ENCODE measurements at regions of chr4 and their contacts with region 1.

Region 1: DNA sequence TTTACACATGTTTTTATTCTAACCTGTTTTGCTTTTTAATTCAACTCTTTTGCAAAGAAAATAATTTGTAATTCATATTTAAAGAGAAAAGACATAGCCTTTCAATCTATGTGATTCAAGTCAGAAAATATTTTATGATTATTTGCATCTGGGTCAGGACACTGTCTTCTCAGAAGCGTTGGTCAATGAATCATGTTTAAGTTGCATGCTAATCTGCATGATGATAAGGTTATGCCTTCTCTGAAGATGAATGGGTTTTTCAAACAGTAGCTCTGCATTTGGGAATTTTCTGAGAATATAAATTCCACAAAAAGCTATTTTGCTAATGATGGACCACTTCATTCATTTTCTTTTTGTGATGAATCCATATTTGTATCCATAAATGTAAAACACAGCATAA is 282.5 kb downstream of the TMA16 start:
- DNase-seq: no peak
- ATAC-seq: no peak
- H3K4me3 ChIP-seq: no peak overlapping the region
- H3K27ac ChIP-seq: no peak overlapping the region
- H3K4me1 ChIP-seq: no peaks in the 10 kb centered on the region
- H3K27me3 ChIP-seq: no peaks in the 10 kb centered on the region
- CTCF ChIP-seq: no peak
- POLR2A ChIP-seq: no peak
- RAD21 ChIP-seq: no peak

Region 2: GRCh38 chr4:163651761-163652160 is 125.2 kb before region 1 on chr4:
- CTCF ChIA-PET with region 1: no interaction called
- POLR2A ChIA-PET with region 1: no interaction called
- dilution Hi-C with region 1: no loop called
- in situ Hi-C with region 1: no loop called
- intact Hi-C with region 1: no loop called
- DNase-seq: no peak
- ATAC-seq: no peak
- H3K4me3 ChIP-seq: no peak overlapping the region
- H3K27ac ChIP-seq: no peak overlapping the region
- H3K4me1 ChIP-seq: no peaks in the 10 kb centered on the region
- H3K27me3 ChIP-seq: no peaks in the 10 kb centered on the region
- CTCF ChIP-seq: no peak
- POLR2A ChIP-seq: no peak
- RAD21 ChIP-seq: no peak

Region 3: GRCh38 chr4:164753872-164754488 is 977.0 kb after region 1 on chr4 and contains the start of gene SMIM31:
- CTCF ChIA-PET with region 1: no interaction called
- POLR2A ChIA-PET with region 1: interaction called, 14 read pairs
- dilution Hi-C with region 1: no loop called
- in situ Hi-C with region 1: no loop called
- intact Hi-C with region 1: no loop called
- DNase-seq: no peak
- ATAC-seq: no peak
- H3K4me3 ChIP-seq: no peak within 1 kb of the TSS
- H3K27ac ChIP-seq: no peak within 1 kb of the TSS
- H3K4me1 ChIP-seq: no peaks in the 10 kb centered on the region
- H3K27me3 ChIP-seq: no peaks in the 10 kb centered on the region
- CTCF ChIP-seq: no peak
- POLR2A ChIP-seq: no peak
- RAD21 ChIP-seq: no peak
- total RNA-seq, gene SMIM31: not detected in 2 replicates